B cell (primary cell): ENCODE measurements at regions of chr5 and their contacts with region 1.

Region 1: DNA sequence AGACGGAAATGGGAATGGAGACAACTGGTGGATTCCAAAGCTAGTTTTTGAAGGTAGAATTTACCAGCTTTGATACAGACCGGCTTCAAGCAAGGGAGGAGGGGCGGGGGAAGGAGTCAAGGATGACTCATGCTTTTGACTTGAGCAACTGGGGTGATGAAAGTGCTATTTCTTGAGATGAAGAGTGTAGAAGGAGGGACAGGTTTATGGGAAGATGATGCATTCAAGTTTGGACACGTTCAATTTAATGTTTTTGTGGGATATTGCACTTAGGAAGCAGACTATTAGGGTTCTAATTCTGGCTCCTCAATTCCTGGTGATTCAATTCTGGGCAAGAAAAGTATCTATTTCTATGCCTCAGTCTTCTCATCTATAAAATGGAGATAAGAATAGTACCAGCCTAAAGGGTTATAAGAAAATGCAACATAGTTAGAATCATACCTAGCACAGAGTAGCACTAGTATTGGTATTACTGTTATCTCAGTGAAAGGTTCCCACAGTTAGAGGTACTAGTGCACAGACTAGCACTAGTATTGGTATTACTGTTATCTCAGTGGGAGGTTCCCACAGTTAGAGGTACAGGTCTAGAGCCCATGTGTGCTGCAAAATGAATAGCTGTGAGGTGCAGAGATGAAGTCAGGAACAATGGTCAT is 4.6 kb downstream of the NIPAL4 start:
- DNase-seq: peak; percentile 6
- ATAC-seq: peak; percentile 39
- H3K4me3 ChIP-seq: no peak overlapping the region
- H3K4me3 Mint-ChIP-seq: peak overlapping the region; percentile 5
- H3K27ac ChIP-seq: no peak overlapping the region
- H3K27ac Mint-ChIP-seq: peak overlapping the region; percentile 16
- H3K4me1 ChIP-seq: peaks cover 18 to 30% of the 10 kb centered on the region in 2 donors
- H3K4me1 Mint-ChIP-seq: peaks cover 53% of the 10 kb centered on the region
- H3K27me3 ChIP-seq: no peaks in the 10 kb centered on the region
- H3K27me3 Mint-ChIP-seq: no peaks in the 10 kb centered on the region
- CTCF ChIP-seq: no peak

Region 2: DNA sequence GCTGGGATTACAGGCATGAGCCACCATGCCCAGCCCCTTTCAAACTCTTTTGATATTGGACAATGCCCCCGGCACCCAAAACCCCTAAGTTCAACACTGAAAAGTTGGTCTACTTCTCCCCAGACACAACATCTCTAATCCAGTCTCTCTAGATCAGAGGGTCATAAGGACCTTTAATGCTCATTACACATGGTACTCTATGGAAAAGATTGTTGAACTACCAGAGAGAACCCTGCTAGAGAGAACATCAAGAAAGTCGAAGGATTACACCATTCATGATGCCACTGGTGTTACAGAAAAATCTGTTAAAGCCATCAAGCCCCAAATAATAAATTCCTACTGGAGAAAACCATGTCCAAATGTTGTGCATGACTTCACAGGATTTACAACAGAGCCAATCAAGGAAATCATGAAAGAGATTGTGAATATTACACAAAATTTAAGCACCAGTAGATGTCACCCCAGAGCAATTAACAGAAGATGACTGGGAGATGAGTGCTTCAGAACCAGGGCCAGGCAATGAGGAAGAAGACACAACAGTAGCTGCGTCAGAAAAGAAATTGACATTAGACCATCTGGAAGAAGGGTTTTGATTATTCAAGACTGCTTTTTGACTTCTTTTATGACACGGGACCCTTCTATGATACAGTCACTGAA is 33.0 kb before region 1 on chr5:
- CTCF ChIA-PET with region 1: interaction called, 162 read pairs
- POLR2A ChIA-PET with region 1: interaction called, 5 read pairs
- intact Hi-C with region 1: no loop called
- DNase-seq: peak; percentile 84
- ATAC-seq: peak; percentile 100
- H3K4me3 ChIP-seq: peak overlapping the region in 1 of 5 experiments; percentile 30
- H3K4me3 Mint-ChIP-seq: peak overlapping the region; percentile 40
- H3K27ac ChIP-seq: peak overlapping the region; percentile 28 to 67
- H3K27ac Mint-ChIP-seq: peak overlapping the region; percentile 88
- H3K4me1 ChIP-seq: peaks cover 8 to 11% of the 10 kb centered on the region in 2 donors
- H3K4me1 Mint-ChIP-seq: peaks cover 18% of the 10 kb centered on the region
- H3K27me3 ChIP-seq: no peaks in the 10 kb centered on the region
- H3K27me3 Mint-ChIP-seq: no peaks in the 10 kb centered on the region
- CTCF ChIP-seq: peak; percentile 76

Region 3: GRCh38 chr5:157548513-157549297 is 84.1 kb after region 1 on chr5:
- CTCF ChIA-PET with region 1: no interaction called
- POLR2A ChIA-PET with region 1: no interaction called
- intact Hi-C with region 1: no loop called
- DNase-seq: no peak
- ATAC-seq: no peak
- H3K4me3 ChIP-seq: no peak overlapping the region
- H3K4me3 Mint-ChIP-seq: peak overlapping the region; percentile 55
- H3K27ac ChIP-seq: peak overlapping the region; percentile 3 to 80
- H3K27ac Mint-ChIP-seq: peak overlapping the region; percentile 85
- H3K4me1 ChIP-seq: peaks cover 86% of the 10 kb centered on the region in 2 donors
- H3K4me1 Mint-ChIP-seq: peaks cover 90% of the 10 kb centered on the region
- H3K27me3 ChIP-seq: no peaks in the 10 kb centered on the region
- H3K27me3 Mint-ChIP-seq: no peaks in the 10 kb centered on the region
- CTCF ChIP-seq: no peak